A673 (cell line): ENCODE measurements at regions of chr13 and their contacts with region 1.

Region 1: GRCh38 chr13:44050450-44051063 is 170.9 kb downstream of the LACC1 start:
- DNase-seq: peak; percentile 36
- H3K4me3 ChIP-seq: no peak overlapping the region
- H3K27ac ChIP-seq: no peak overlapping the region
- H3K4me1 ChIP-seq: no peaks in the 10 kb centered on the region
- H3K27me3 ChIP-seq: peaks cover 5% of the 10 kb centered on the region
- CTCF ChIP-seq: peak; percentile 72

Region 2: DNA sequence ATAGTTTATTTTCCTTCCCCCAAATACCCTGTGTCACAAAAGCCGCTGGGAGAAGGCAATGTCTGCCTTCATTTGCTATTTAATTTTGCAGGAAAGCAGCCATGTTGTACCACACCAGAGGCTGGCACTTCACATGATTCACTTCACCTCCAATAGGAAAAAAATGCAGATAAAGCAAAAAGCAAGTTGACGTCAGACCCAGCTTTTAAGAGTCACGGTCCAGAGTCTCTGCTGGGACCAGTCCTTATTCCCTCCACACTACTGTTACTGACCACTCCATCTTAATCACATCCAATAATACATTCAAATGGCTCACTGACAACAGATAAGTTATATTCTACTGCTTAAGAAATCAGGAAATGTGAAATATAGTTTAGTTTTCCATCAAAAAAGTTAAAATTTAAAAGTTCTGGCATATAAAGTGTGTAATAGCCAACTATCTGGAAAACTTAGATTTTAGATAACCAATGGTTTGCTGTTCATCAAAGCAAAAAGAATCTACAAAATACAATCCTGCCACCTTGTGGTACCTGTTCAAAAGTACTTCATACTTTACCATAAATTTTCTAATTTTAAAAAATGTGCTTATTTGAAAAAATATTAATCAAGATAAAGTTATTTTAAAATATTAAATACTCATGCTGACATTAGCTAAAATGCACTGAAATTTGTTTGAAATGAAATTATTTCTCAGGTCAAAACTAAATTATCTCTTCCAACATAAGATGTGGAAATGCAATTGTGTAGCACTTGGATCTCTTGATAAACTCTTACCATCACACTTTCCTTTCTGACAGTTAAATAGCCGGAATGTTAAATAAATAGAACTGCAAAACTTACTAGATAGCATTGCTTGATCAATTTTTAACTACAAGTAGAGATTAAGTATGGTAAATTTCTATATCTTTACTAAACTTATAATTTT is 420.3 kb after region 1 on chr13:
- CTCF ChIA-PET with region 1: interaction called, 6 read pairs
- POLR2A ChIA-PET with region 1: no interaction called
- intact Hi-C with region 1: loop called (anchors 1 kb)
- DNase-seq: peak; percentile 42
- H3K4me3 ChIP-seq: no peak overlapping the region
- H3K27ac ChIP-seq: no peak overlapping the region
- H3K4me1 ChIP-seq: peaks cover 18% of the 10 kb centered on the region
- H3K27me3 ChIP-seq: no peaks in the 10 kb centered on the region
- CTCF ChIP-seq: peak; percentile 63